ENCODE measurements at regions of chr10 and their contacts with region 1.

Region 1: DNA sequence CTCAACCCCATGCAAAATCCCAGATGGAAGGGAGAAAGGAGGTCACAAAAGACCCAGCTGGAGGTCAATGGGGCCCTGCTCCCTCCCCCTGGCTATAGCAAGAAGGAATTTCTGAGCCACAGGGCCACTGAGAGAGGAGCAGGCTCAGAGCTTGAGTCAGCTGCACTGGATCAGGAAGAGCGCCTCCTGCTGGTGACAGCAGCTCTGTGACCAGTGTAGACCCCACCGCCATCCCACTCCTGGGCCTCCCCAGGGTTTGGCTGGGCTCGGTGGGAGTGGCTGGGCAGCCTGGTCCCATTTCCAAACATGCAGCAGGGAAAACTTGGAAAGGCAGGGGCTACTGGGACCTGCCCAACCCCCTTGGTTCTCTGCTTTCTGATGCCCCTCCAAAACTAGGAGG is 31.5 kb upstream of the PRLHR start:
- DNase-seq: no peak
- ATAC-seq: peak; percentile 70
- H3K4me3 ChIP-seq: no peak overlapping the region
- H3K27ac ChIP-seq: no peak overlapping the region
- H3K4me1 ChIP-seq: no peaks in the 10 kb centered on the region
- H3K27me3 ChIP-seq: peaks cover 57% of the 10 kb centered on the region
- CTCF ChIP-seq: peak in 2 of 3 experiments; percentile 54 to 65; a peak in 4 of 6 replicates
- POLR2A ChIP-seq: no peak
- RAD21 ChIP-seq: no peak

Region 2: DNA sequence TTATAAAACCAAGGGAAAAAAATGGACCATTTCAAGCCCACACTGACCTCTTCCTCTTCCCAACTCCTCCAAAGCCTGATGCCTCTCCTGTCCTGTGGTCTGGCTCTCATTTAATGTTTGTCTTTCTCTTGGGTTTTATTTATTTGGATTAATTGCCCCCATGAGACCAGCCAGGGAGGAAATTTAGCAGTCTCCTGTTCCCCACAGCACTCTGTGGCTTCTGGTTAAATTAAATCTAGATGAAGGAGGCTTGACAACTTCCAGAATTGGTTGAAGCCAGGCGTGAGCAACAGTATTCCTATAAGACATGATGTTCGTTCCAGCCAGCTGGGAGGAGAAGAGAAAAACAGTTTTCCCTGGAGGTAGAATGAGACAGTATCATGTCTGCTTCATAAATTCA is 16.4 kb before region 1 on chr10:
- CTCF ChIA-PET with region 1: interaction called, 13 read pairs
- POLR2A ChIA-PET with region 1: no interaction called
- RAD21 ChIA-PET with region 1: no interaction called
- intact Hi-C with region 1: no loop called
- DNase-seq: no peak
- ATAC-seq: no peak
- H3K4me3 ChIP-seq: no peak overlapping the region
- H3K27ac ChIP-seq: no peak overlapping the region
- H3K4me1 ChIP-seq: no peaks in the 10 kb centered on the region
- H3K27me3 ChIP-seq: peaks cover 48% of the 10 kb centered on the region
- CTCF ChIP-seq: no peak
- POLR2A ChIP-seq: no peak
- RAD21 ChIP-seq: no peak